ENCODE measurements at regions of chr2 and their contacts with region 1.

Region 1: DNA sequence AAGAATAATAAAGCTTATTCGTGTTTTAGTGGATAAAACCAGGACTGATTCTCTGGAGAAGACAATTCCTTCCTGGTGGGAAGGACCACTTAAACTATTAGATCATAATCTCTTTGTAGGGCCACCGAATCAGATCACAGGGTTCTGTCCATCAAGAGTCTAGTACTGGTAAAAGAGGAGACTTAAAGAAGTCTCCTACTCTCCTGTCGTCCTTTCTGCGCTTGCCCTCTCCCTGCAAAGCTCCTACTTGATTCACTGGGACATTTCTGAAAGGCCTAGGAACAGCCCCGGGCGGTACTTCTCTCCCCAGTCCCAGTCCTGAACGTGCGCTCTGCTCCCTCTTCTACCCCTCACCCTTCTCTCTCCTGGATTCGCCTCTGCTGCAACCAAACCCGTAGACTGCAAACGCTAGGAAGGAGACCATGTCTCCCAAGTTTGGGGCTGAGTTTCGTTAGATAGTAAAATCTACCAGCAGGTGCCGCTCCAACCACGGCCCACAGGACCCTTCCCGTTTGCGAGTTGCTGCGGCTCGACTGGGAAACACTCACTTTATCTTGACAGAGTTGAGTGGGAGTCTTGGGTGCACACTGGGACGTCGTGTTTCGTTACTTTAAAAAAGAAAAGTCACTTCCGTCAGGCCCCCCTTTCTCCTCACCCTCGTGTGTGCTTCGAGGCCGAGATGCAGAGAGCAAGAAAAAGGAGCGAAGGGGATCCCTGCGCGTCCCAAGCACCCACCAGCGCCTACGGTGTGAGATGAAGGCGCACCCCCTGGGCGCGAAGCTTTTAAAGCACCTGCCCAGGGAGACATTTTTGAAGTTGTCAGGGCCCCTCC is 923 bp downstream of the FIGLA start:
- DNase-seq: peak; percentile 57 to 84
- H3K4me3 ChIP-seq: peak overlapping the region in 2 of 4 experiments; percentile 19 to 54; a peak in 5 of 8 replicates
- H3K27ac ChIP-seq: no peak overlapping the region
- H3K4me1 ChIP-seq: peaks cover 0 to 3% (median 0%) of the 10 kb centered on the region in 4 experiments; a peak in 1 of 7 replicates
- H3K27me3 ChIP-seq: peaks cover 35 to 58% (median 42%) of the 10 kb centered on the region in 4 experiments
- CTCF ChIP-seq: peak; percentile 75 to 92 (median 86)
- EP300 ChIP-seq: no peak
- POLR2A ChIP-seq: no peak
- RAD21 ChIP-seq: peak; percentile 89 to 94

Region 2: DNA sequence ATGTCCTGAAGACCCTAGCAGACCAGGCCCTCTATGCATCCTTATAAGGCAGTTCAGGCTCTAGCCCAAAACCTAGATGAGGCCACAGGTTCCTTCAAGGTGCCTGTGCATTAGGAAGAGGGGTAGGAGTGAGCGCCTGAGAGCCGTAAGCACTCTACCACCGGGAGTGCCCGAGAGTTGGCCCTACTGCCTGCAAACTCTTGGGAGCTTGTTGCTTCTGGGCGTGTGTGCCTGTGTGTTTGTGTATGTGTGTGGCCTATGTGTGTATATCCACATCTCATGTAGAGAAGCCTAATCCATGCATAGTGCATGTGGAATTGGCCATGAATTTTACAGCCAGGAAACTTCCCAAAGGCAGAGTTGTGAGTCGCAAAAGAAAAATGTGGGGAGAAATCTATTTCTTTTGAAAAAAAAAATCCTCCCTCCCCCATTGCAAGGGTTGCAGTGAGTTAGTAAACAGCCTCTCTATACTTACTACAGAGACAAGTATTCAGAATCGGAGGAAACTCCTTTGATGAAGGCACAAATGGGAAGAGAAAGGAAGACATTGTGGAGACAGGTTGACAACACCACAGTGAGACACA is 118.3 kb before region 1 on chr2:
- CTCF ChIA-PET with region 1: interaction called, 12 read pairs
- POLR2A ChIA-PET with region 1: no interaction called
- DNase-seq: no peak
- H3K4me3 ChIP-seq: no peak overlapping the region
- H3K27ac ChIP-seq: no peak overlapping the region
- H3K4me1 ChIP-seq: no peaks in the 10 kb centered on the region
- H3K27me3 ChIP-seq: no peaks in the 10 kb centered on the region
- CTCF ChIP-seq: no peak
- EP300 ChIP-seq: no peak
- POLR2A ChIP-seq: no peak
- RAD21 ChIP-seq: no peak

Region 3: GRCh38 chr2:70703900-70704549 is 85.5 kb before region 1 on chr2:
- CTCF ChIA-PET with region 1: interaction called, 15 read pairs
- POLR2A ChIA-PET with region 1: no interaction called
- DNase-seq: no peak
- H3K4me3 ChIP-seq: no peak overlapping the region
- H3K27ac ChIP-seq: no peak overlapping the region
- H3K4me1 ChIP-seq: no peaks in the 10 kb centered on the region
- H3K27me3 ChIP-seq: no peaks in the 10 kb centered on the region
- CTCF ChIP-seq: no peak
- EP300 ChIP-seq: no peak
- POLR2A ChIP-seq: no peak
- RAD21 ChIP-seq: no peak

Region 4: DNA sequence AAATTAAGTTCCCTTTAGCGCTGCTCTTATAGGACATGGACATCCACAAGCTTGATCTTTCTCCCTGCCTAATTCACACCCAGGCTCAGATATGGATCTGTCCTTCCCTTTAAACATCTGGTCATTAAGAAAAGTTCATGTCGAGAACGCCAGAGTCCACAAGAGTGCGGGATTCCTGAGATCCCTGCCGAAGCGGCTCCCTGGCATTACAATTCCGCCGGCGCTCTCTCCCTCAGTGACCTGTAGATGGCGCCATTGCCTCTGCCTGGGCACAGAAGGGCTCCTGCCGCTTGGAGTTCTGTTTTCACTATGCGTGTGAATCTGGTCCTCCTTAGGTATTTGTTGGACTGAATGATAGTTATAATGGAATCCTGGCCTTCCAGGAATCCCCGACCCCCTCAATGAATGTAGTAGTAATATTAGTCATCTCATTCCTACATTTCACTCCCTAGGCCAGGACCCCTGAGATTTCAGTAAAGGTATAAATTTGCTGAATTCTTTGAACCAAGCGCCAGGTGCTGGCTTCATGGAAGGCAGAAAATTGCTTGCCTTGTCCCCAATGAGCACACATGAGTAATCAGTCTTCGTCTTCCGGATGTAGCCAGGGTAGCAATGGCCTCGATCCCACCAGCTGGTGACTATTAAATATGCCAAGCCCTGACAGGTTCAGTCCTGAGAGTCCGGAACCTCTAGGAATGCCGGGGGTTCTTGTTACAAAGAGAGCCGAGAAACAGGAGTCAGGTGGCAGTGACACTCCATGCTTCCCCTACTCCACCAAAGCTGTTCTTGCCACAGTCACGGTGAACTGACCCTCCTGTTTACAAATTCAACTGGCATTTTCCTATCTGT is 72.5 kb after region 1 on chr2:
- CTCF ChIA-PET with region 1: interaction called, 91 read pairs
- POLR2A ChIA-PET with region 1: no interaction called
- DNase-seq: peak in 1 of 2 experiments; percentile 97
- H3K4me3 ChIP-seq: no peak overlapping the region
- H3K27ac ChIP-seq: no peak overlapping the region
- H3K4me1 ChIP-seq: no peaks in the 10 kb centered on the region
- H3K27me3 ChIP-seq: peaks cover 0 to 24% (median 12%) of the 10 kb centered on the region in 4 experiments; a peak in 6 of 7 replicates
- CTCF ChIP-seq: peak; percentile 97 to 99 (median 97)
- EP300 ChIP-seq: no peak; a peak in 1 of 3 replicates
- POLR2A ChIP-seq: no peak
- RAD21 ChIP-seq: peak; percentile 86 to 94

Region 5: GRCh38 chr2:70919672-70920366 is 130.3 kb after region 1 on chr2:
- CTCF ChIA-PET with region 1: interaction called, 23 read pairs
- POLR2A ChIA-PET with region 1: no interaction called
- DNase-seq: peak; percentile 79 to 99
- H3K4me3 ChIP-seq: no peak overlapping the region
- H3K27ac ChIP-seq: no peak overlapping the region
- H3K4me1 ChIP-seq: peaks cover 0 to 8% (median 3%) of the 10 kb centered on the region in 4 experiments; a peak in 4 of 7 replicates
- H3K27me3 ChIP-seq: peaks cover 0 to 4% (median 0%) of the 10 kb centered on the region in 4 experiments; a peak in 1 of 7 replicates
- CTCF ChIP-seq: peak; percentile 91 to 98 (median 96)
- EP300 ChIP-seq: no peak
- POLR2A ChIP-seq: no peak
- RAD21 ChIP-seq: peak; percentile 77 to 82

Region 6: DNA sequence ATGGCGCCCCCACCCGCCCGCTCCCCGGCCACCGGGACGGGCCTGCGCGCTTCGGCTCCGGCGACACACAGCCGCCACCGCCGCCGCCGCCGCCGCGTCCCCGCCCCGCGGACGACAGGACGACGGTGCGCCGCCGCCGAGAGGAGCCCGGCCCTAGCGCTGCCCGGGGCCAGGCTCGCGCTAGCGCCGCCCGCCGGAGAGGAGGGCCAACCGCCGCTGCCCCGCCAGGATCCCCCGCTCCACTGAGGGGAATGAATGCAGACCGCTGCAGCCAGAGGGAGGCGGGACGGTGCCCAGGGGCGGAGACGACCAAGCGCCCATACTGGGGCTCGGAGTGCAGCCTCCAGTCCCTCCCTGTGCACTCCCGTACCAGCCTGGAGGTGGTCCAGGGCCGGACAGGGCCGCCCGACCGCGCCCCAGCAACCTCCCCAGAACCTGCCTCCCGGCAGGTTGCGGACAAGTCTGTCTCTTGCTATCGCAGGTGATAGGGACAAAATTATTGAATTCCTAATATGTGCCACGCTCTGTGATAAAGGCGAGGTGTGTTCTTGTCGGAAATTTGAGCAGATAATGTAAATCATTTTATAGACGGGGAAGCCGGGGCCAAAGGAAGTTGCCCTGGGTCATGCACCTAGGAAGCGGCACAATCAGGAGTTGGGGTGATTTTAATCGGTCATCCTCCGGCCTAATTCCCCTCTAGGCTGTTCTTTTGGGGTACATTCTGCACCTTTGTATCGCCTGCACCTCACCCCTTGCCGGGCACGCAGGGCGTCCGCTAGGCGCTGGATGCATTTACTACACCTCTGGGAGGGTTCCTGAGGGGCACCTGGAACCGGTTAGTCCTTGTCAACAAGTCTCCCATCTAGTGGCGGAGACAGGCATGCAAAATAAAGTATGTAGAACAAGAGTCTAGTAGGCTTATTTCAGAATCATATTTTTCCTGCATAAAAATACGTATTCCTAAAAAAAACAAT is 205.5 kb after region 1 on chr2 and contains the start of gene TEX261:
- CTCF ChIA-PET with region 1: no interaction called
- POLR2A ChIA-PET with region 1: no interaction called
- DNase-seq: peak in 1 of 2 experiments; percentile 98
- H3K4me3 ChIP-seq: peak within 1 kb of the TSS; percentile 71 to 90 (median 76)
- H3K27ac ChIP-seq: no peak within 1 kb of the TSS
- H3K4me1 ChIP-seq: peaks cover 0 to 5% (median 3%) of the 10 kb centered on the region in 4 experiments; a peak in 3 of 7 replicates
- H3K27me3 ChIP-seq: peaks cover 0 to 7% (median 0%) of the 10 kb centered on the region in 4 experiments; a peak in 3 of 7 replicates
- CTCF ChIP-seq: peak; percentile 77 to 86 (median 85)
- EP300 ChIP-seq: peak in 1 of 2 experiments; percentile 54; a peak in 1 of 3 replicates
- POLR2A ChIP-seq: no peak
- RAD21 ChIP-seq: peak in 1 of 2 experiments; percentile 19; a peak in 1 of 4 replicates
- total RNA-seq, gene TEX261: 24.3 and 25.2 TPM in 2 replicates

Measured in H1 (cell line).